ENCODE measurements at regions of chr12 and their contacts with region 1.

Region 1: DNA sequence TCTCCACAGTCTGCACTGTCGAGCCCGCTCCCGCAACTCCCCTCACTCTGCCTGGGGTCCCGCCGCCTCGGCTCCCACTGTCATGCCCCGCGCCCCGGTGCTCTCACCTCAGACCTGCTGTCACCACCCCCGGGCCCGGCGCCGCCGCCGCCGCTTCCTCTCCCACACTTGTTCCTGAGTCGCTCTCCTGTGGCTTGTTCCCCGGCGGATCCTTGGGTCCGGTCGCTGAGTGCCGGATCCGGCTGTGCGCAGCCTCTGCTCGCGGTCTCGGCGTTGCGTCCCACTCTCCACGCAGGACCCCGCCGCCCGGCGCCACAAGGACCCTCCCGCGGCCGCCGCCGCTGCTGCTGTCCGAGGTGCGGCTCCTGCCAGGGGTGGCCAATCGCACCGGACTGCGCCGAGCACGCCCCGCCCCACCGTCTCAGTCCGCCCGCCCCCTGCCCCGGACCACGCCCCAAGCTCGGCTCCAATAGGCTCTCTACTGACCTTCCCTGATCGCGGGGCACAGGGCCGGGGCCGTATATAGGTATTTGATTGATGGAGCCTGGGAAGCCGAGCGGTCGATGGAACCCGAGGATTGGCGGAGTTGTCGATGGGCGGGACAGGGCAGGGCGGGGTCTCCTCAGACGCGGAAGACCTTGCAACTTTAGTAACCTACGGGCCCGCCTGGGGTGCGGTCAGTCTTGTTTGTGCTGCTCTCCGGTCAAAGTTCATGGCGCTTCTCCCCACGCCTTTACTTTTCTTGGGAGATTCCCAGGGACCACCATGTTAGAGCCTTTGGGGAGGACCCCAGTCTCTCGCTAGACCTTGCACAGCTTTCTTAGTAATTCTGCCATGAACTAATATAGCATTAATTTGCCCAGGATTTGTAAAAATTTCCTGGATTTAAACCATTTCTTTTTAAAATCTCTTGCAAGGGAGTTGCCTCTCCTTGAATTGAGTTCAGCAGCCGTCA is at the start of gene TAOK3:
- DNase-seq: peak; percentile 88
- ATAC-seq: peak; percentile 87
- H3K4me3 ChIP-seq: peak within 1 kb of the TSS; percentile 88 to 89
- H3K27ac ChIP-seq: peak within 1 kb of the TSS; percentile 98
- H3K4me1 ChIP-seq: peaks cover 5% of the 10 kb centered on the region; the same call in 1 of the 2 replicates
- H3K27me3 ChIP-seq: no peaks in the 10 kb centered on the region
- CTCF ChIP-seq: no peak
- total RNA-seq, gene TAOK3: 30.5 TPM

Region 2: GRCh38 chr12:118120579-118121363 is 252.0 kb before region 1 on chr12:
- CTCF ChIA-PET with region 1: interaction called, 11 read pairs
- POLR2A ChIA-PET with region 1: no interaction called
- in situ Hi-C with region 1: no loop called
- intact Hi-C with region 1: loop called (anchors 1 kb)
- DNase-seq: no peak
- ATAC-seq: peak; percentile 90
- H3K4me3 ChIP-seq: no peak overlapping the region
- H3K27ac ChIP-seq: peak overlapping the region; percentile 50; the same call in 1 of the 2 replicates
- H3K4me1 ChIP-seq: no peaks in the 10 kb centered on the region; the same call in 1 of the 2 replicates
- H3K27me3 ChIP-seq: no peaks in the 10 kb centered on the region
- CTCF ChIP-seq: peak; percentile 90

Region 3: DNA sequence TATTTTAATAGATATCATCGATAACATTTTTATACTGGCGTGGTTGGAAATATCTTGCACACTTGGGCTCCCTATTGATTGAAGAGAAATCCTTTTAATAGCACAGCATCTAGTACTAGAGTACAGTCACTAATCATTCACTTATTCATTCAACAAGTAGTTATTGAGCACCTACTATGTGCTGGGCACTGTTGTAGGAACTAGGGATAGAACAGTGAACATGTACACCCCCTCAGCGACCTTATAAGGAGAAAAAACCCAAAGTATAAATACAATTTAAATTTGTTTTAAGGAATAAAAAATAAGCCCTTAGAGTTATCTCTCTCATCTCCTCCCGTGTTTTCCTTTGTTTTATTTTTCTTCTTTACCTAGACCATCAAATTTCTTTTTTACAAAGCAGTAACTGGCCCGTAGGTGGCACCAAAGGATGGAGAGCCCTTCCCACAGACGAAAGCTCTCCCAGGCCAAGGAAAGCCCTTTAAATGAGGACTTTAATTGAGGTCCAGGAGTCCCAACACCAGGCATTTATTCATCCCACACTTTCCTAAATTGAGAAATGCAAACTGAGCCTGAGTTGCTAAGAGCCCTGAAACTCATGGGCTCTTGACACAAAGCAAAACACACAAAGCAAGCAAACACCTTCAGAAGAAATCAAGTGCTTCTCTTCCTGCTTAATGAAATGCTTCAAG is 207.9 kb before region 1 on chr12:
- CTCF ChIA-PET with region 1: interaction called, 12 read pairs
- POLR2A ChIA-PET with region 1: interaction called, 13 read pairs
- in situ Hi-C with region 1: no loop called
- intact Hi-C with region 1: no loop called
- DNase-seq: no peak
- ATAC-seq: peak; percentile 75
- H3K4me3 ChIP-seq: no peak overlapping the region
- H3K27ac ChIP-seq: no peak overlapping the region
- H3K4me1 ChIP-seq: no peaks in the 10 kb centered on the region
- H3K27me3 ChIP-seq: no peaks in the 10 kb centered on the region
- CTCF ChIP-seq: peak; percentile 74

Region 4: GRCh38 chr12:118183705-118184104 is 189.1 kb before region 1 on chr12:
- CTCF ChIA-PET with region 1: interaction called, 13 read pairs
- POLR2A ChIA-PET with region 1: no interaction called
- in situ Hi-C with region 1: no loop called
- intact Hi-C with region 1: loop called (anchors 2 kb)
- DNase-seq: no peak
- ATAC-seq: no peak
- H3K4me3 ChIP-seq: no peak overlapping the region
- H3K27ac ChIP-seq: no peak overlapping the region
- H3K4me1 ChIP-seq: no peaks in the 10 kb centered on the region
- H3K27me3 ChIP-seq: no peaks in the 10 kb centered on the region
- CTCF ChIP-seq: no peak

Region 5: DNA sequence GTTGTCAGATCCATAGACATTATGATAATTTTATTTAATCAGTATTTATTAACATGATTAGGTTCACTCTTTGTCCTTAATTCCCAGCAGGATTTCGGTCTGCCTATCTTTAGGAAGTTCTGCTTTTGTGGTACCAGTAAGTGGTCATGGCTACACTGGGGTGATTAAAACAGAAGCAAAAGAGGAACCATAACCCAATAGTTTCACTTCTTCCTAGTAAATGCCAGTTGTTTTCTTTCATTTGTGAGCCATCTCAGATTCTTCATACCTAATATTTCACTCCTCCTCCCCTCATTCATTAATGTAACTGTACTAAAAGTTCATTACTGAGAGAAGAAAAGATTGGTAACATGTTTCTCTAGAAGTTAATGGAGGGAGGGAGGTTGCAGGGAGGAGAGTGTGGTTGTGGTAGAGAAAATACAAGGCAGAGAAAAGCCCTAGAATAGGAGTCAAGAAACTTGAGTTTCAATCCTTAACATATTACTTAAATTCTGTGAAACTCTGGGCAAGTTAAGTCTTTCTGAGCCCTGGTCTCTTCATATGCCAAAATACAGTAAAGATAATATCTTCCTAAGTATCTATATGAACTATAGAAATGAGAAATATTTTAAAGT is 135.7 kb before region 1 on chr12:
- CTCF ChIA-PET with region 1: interaction called, 11 read pairs
- POLR2A ChIA-PET with region 1: no interaction called
- in situ Hi-C with region 1: no loop called
- intact Hi-C with region 1: no loop called
- DNase-seq: no peak
- ATAC-seq: no peak
- H3K4me3 ChIP-seq: no peak overlapping the region
- H3K27ac ChIP-seq: no peak overlapping the region
- H3K4me1 ChIP-seq: no peaks in the 10 kb centered on the region
- H3K27me3 ChIP-seq: no peaks in the 10 kb centered on the region
- CTCF ChIP-seq: no peak